Activated T-helper 1 cell treated with anti-CD3 and anti-CD28 coated beads, Interleukin-12 subunit alpha, Interleukin-12 subunit beta, Interleukin-2, Interleukin-4 antibody, amounts not matched to agents 30 ng/mL and 10 ng/mL and 1 ng/mL, durations not matched to agents 14 hours and 24 hours and 36 hours (primary cell): ENCODE measurements at regions of chr20 and their contacts with region 1.

Region 1: GRCh38 chr20:16599257-16599656 is 26.0 kb upstream of the KIF16B start:
- DNase-seq: no peak
- H3K4me3 Mint-ChIP-seq: no peak overlapping the region
- H3K27ac Mint-ChIP-seq: no peak overlapping the region
- H3K4me1 Mint-ChIP-seq: peaks cover 5% of the 10 kb centered on the region
- H3K27me3 Mint-ChIP-seq: peaks cover 7% of the 10 kb centered on the region

Region 2: DNA sequence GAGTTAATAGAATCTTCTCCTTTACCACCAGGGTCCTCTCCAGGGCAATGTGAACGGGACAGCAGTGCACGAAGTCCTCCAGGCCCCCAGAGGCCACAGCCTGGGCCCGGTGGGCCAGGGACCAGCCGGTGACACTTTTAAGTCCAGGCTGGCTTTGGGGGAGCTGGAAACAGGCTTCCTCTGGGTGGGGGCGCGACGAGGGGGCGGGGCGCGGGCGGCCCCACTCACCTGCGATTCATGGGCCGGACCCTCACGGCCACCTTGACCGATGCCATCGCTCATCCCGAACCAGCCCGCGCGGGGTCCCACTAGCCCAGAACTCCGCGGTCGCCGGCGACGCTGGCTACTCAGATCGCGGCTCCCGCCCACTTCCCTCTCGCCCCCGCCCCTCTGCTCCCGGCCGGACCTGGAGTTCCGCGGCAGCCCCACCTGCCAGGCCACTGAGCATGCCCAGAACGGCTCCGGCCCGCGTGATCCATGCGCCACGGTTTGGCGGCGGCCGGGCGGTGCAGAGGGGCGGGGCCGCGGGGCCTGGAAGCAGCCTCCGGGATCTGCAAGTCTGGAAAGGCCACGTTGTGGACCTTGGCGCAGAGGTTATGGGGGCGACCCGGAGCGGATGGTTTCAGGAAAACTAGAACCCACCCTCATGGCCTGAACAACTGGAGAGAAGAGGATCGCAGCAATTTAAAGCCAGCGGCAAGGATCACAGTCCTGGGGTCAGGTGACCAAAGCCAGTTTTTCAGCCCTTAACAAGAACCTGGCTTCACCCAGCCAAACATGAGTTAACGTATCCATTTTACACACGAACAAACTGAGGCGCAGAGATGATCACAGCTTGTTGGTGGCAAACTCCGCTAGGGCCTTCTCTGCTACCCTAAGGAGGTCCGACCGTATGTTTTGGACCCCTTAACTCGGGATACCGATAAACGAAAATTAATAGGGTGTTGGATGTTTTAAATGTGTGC is 26.0 kb before region 1 on chr20 and contains the start of gene KIF16B:
- intact Hi-C with region 1: loop called (anchors 1 kb)
- DNase-seq: peak; percentile 83
- H3K4me3 Mint-ChIP-seq: peak within 1 kb of the TSS; percentile 90
- H3K27ac Mint-ChIP-seq: peak within 1 kb of the TSS; percentile 91
- H3K4me1 Mint-ChIP-seq: peaks cover 36% of the 10 kb centered on the region
- H3K27me3 Mint-ChIP-seq: no peaks in the 10 kb centered on the region
- total RNA-seq, gene KIF16B: 7.2 and 8.1 TPM in 2 replicates